Vagina (tissue), 2 donors: ENCODE measurements at regions of chr15 and their contacts with region 1.

Region 1: DNA sequence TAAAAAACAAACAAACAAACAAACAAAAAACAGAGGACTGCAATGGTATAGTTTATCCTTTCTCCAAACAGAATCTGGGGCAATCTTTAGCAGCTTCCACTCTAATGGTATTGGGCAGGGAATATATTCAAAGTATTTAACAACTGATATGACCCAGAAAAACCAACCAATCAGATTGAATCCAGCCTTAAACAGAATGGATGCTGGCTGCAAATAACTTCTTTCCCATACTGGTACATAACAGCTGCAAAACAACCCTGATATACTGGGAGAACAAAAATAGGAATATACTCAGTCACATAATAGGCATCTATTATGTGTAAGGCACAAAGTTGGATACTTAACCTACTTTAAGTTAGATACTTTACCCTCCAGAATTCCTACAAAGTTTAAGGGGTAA is 49.1 kb downstream of the UBR1 start:
- DNase-seq: no peak
- H3K4me3 ChIP-seq: no peak overlapping the region
- H3K27ac ChIP-seq: no peak overlapping the region
- H3K4me1 ChIP-seq: no peaks in the 10 kb centered on the region
- H3K27me3 ChIP-seq: no peaks in the 10 kb centered on the region
- CTCF ChIP-seq: no peak
- POLR2A ChIP-seq: no peak

Region 2: DNA sequence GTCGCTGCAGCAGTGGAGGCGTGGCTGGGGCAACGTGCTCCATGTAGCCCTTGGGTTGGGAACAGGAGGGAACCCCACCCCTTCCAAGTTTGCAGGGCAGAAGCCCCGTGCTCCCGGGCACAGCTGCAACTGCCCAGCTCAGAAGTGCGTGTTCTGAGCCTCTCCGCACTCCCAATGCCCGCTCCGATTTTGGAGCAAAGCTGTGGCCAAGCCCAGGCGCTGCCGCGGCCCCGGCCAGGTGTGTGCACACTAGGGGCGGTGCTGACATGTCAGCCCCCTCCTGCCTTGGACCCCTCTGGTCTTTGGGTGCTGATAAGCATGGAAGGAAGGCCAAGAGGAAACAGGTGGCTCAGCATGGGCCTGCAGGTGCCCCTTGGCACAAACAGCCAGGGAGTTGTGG is 48.5 kb before region 1 on chr15:
- intact Hi-C with region 1: loop called (anchors 10 kb)
- DNase-seq: no peak
- H3K4me3 ChIP-seq: no peak overlapping the region
- H3K27ac ChIP-seq: no peak overlapping the region
- H3K4me1 ChIP-seq: no peaks in the 10 kb centered on the region
- H3K27me3 ChIP-seq: no peaks in the 10 kb centered on the region
- CTCF ChIP-seq: no peak
- POLR2A ChIP-seq: no peak

Region 3: DNA sequence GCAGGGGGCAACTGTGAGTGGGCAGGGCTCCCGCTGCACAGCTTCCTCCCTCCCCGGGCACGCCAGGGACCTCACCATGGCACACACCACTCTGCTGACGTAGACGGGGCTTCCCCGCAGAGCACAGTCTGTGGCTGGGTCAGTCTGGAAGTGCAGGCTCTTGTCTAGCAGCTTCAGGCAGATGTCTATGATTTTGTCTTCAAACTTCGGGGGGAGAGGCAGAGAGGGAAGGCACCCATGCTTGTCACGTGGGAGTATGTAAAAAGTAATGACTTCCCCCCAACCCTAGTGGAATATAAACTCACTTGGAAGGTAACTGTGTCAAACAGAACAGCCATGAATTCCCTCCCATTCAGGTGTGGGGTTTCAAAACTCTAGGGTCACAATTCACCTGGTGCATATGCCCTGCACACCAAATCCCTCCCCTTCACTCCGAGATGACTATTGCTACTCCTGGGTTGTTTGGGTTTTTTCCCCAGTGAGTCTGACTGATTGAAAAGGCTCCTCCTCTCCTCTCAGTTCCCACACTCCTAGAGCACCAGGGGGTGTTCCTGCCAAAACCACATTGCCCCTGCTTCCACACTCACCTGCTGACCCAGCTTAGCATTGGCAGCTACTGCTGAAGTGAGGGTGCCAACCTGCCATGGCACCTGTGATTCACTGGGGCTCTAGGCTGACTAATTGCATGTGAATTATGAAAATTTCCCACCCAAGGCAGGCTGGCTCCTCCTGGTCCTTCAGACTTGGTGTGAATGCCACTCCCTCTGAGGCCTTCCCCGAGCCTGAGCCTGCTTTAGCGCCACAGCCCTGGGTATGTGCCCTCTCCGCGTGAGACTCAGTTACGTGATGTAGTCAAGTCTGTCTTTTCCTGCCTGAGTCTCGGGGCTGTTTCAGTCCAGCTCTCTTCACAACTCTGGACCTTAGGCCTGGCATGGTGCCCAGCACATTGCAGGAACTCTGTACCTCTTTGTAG is 197.0 kb after region 1 on chr15:
- intact Hi-C with region 1: no loop called
- DNase-seq: peak in 1 of 2 donors; percentile 85
- H3K4me3 ChIP-seq: no peak overlapping the region
- H3K27ac ChIP-seq: no peak overlapping the region
- H3K4me1 ChIP-seq: no peaks in the 10 kb centered on the region
- H3K27me3 ChIP-seq: no peaks in the 10 kb centered on the region
- CTCF ChIP-seq: no peak
- POLR2A ChIP-seq: no peak